ENCODE measurements at regions of chr13 and their contacts with region 1.

Region 1: GRCh38 chr13:33228648-33229445 is 56.7 kb downstream of the STARD13 start:
- DNase-seq: peak in 2 of 9 experiments; percentile 52 to 61
- ATAC-seq: peak; percentile 72
- H3K4me3 ChIP-seq: no peak overlapping the region
- H3K4me3 Mint-ChIP-seq: no peak overlapping the region
- H3K27ac ChIP-seq: no peak overlapping the region
- H3K27ac Mint-ChIP-seq: no peak overlapping the region
- H3K4me1 ChIP-seq: no peaks in the 10 kb centered on the region
- H3K4me1 Mint-ChIP-seq: peaks cover 3% of the 10 kb centered on the region
- H3K27me3 ChIP-seq: no peaks in the 10 kb centered on the region
- H3K27me3 Mint-ChIP-seq: peaks cover 7% of the 10 kb centered on the region
- CTCF ChIP-seq: peak; percentile 94

Region 2: DNA sequence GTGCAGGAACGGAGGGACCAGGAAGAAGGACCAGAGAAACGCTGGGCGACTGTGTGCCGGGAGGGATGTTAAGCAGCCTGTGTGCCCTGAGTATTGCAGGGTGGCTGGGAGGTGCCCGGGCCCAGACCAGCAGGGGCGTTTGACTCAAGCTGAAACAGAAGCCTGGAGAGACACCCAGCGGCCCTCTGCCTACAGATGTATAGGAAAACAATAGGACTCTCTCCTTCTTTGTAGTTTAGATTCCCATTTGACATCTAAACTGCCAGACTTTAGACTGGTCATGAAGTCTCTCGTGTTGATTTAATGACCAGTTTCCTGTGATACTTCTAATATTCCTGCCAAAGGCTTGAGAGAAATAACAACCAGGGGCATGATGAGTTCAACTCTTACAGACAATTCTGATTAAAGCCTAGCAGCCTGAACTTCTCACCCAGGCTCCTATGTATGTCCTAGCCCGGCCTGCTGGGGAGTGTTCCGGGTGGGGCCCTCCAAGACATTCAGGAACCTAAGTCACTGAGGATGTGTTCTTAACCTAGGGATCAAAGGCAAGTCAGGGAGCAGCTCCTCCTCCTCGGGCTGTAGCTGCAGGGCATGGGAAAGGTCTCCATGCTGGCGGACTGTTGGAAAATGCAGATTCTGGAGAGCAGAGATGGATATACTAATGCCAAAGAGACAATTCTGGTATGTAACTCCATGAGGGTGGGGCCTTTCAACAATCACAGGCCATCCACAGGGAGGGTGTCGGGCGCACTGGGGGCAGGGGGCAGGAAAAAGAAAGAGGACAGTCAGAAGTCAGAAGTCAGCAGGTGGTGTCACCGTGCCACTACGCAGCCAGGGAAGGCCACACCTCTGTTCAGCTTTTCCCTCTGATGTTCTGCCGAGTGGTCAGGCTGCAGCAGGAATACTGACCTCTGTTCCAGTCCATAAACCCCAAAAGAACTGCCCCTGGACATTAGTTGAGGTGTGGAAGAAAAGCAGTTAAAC is 75.1 kb before region 1 on chr13:
- CTCF ChIA-PET with region 1: no interaction called
- POLR2A ChIA-PET with region 1: no interaction called
- intact Hi-C with region 1: no loop called
- DNase-seq: no peak
- ATAC-seq: no peak
- H3K4me3 ChIP-seq: no peak overlapping the region
- H3K4me3 Mint-ChIP-seq: no peak overlapping the region
- H3K27ac ChIP-seq: no peak overlapping the region
- H3K27ac Mint-ChIP-seq: no peak overlapping the region
- H3K4me1 ChIP-seq: no peaks in the 10 kb centered on the region
- H3K4me1 Mint-ChIP-seq: no peaks in the 10 kb centered on the region
- H3K27me3 ChIP-seq: no peaks in the 10 kb centered on the region
- H3K27me3 Mint-ChIP-seq: peaks cover 10% of the 10 kb centered on the region
- CTCF ChIP-seq: no peak

Region 3: DNA sequence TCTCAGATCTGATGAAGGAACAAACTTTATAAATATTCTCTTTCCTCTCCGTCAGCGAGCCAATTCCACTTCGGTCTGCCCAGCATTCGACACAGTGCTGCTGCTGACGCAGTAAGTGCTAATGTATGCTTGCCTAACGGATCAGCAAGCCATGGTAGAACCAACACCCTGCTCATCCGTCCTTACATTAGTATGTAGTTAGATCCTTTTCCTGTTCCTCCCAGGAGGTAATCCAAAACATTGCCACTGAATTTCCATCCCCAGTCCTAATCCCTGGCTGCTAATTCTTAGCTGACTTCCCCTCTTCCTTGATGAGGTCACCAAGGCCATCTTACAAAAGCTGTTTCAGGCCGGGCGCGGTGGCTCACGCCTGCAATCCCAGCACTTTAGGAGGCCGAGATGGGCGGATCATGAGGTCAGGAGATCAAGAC is 31.3 kb before region 1 on chr13:
- CTCF ChIA-PET with region 1: no interaction called
- POLR2A ChIA-PET with region 1: no interaction called
- intact Hi-C with region 1: no loop called
- DNase-seq: no peak
- ATAC-seq: no peak
- H3K4me3 ChIP-seq: no peak overlapping the region
- H3K4me3 Mint-ChIP-seq: no peak overlapping the region
- H3K27ac ChIP-seq: no peak overlapping the region
- H3K27ac Mint-ChIP-seq: no peak overlapping the region
- H3K4me1 ChIP-seq: no peaks in the 10 kb centered on the region
- H3K4me1 Mint-ChIP-seq: no peaks in the 10 kb centered on the region
- H3K27me3 ChIP-seq: no peaks in the 10 kb centered on the region
- H3K27me3 Mint-ChIP-seq: peaks cover 2% of the 10 kb centered on the region
- CTCF ChIP-seq: no peak

Region 4: GRCh38 chr13:33723772-33724435 is 495.1 kb after region 1 on chr13:
- CTCF ChIA-PET with region 1: interaction called, 47 read pairs
- POLR2A ChIA-PET with region 1: interaction called, 4 read pairs
- intact Hi-C with region 1: loop called (anchors 1 kb)
- DNase-seq: peak; percentile 21 to 82 (median 56)
- ATAC-seq: peak; percentile 84
- H3K4me3 ChIP-seq: no peak overlapping the region
- H3K4me3 Mint-ChIP-seq: no peak overlapping the region
- H3K27ac ChIP-seq: no peak overlapping the region
- H3K27ac Mint-ChIP-seq: no peak overlapping the region
- H3K4me1 ChIP-seq: peaks cover 6% of the 10 kb centered on the region
- H3K4me1 Mint-ChIP-seq: peaks cover 13% of the 10 kb centered on the region
- H3K27me3 ChIP-seq: no peaks in the 10 kb centered on the region
- H3K27me3 Mint-ChIP-seq: no peaks in the 10 kb centered on the region
- CTCF ChIP-seq: peak; percentile 65

Region 5: GRCh38 chr13:35164324-35164932 is 1935.6 kb after region 1 on chr13:
- CTCF ChIA-PET with region 1: no interaction called
- POLR2A ChIA-PET with region 1: no interaction called
- intact Hi-C with region 1: loop called (anchors 5 kb)
- DNase-seq: peak in 2 of 9 experiments; percentile 12 to 40
- ATAC-seq: peak; percentile 51
- H3K4me3 ChIP-seq: no peak overlapping the region
- H3K4me3 Mint-ChIP-seq: no peak overlapping the region
- H3K27ac ChIP-seq: no peak overlapping the region
- H3K27ac Mint-ChIP-seq: no peak overlapping the region
- H3K4me1 ChIP-seq: no peaks in the 10 kb centered on the region
- H3K4me1 Mint-ChIP-seq: peaks cover 7% of the 10 kb centered on the region
- H3K27me3 ChIP-seq: no peaks in the 10 kb centered on the region
- H3K27me3 Mint-ChIP-seq: no peaks in the 10 kb centered on the region
- CTCF ChIP-seq: peak; percentile 71